Sciatic nerve (tissue), 2 donors: ENCODE measurements at regions of chr3 and their contacts with region 1.

Region 1: GRCh38 chr3:36957862-36958686 is 13.2 kb upstream of the TRANK1 start:
- DNase-seq: no peak
- ATAC-seq: peak; percentile 68

Region 2: DNA sequence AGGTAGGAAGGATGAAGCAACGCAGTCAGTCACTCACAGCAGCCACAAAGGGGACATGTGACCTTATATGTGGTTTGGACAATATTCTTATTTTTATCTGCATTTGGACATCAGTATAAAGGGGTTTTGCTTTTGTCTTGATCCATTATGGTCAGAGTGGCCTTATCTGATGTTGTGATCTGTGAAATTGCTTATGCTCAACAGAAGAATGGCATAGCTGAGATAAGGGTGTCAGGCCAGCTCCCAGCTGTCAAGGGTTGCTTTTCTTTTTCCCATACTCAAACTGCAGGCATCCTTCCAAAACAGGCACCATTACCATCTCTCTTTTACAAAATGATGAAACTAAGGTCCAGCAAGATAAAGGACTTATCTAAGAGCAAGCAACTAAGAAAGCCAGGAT is 221.8 kb before region 1 on chr3:
- intact Hi-C with region 1: loop called (anchors 2 kb)
- DNase-seq: no peak
- ATAC-seq: no peak

Region 3: DNA sequence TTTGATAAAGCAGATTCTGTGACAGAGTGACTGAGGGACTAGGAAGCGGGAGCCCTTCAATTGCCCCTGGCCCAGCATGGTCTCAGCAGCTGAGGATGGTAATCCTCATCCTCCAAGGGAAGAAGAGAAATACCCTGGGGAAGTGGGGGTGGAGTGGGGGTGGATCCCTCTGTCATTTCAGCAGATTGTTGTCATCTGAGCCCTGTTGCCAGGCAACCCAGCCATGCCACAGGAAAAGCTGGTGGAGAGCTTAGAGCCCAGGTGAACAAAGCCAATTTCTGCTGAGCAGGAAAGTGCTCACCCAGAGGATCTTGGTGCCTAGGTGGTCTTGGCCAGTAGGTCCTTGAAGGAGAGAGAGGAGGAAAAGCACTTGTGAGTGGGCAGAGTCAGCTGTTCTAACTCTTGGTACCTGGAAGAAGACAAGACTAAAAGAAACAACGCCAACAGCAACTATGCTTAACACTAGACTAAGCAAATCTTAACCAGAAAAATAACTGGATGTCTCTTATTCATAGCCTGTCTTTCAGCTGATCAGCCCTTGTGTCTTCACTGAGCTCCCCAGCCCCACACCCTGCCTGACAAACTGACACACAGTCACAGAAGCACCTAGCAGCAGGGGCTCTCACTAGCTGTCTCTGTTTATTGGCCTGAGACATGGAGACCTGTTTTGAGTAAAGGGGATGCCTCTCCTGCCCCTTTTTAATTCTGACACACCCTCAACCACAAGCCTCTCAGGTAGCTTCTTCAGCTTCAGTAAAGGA is 153.6 kb before region 1 on chr3:
- intact Hi-C with region 1: no loop called
- DNase-seq: no peak
- ATAC-seq: no peak